B cell (primary cell): ENCODE measurements at regions of chr3 and their contacts with region 1.

Region 1: DNA sequence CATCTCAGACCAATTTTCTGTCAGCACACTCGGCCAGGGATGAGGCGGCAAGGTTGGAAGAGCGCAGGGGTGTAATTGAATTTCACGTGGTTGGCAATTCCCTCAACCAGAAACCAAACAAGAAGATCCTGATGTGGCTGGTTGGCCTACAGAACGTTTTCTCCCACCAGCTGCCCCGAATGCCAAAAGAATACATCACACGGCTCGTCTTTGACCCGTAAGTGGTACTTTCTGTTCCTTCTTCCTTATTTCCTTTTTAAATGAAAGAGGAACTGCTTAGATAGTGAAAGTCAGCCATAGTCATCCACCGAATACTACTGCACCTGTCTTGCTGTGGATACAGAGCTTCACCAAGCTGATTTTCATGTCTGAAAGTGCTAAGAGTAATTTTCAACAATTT is 60.1 kb downstream of the SGO1 start:
- DNase-seq: peak; percentile 91
- ATAC-seq: peak; percentile 97
- H3K4me3 ChIP-seq: peak overlapping the region; percentile 2 to 51 (median 11)
- H3K4me3 Mint-ChIP-seq: peak overlapping the region; percentile 78
- H3K27ac ChIP-seq: peak overlapping the region; percentile 93 to 94
- H3K27ac Mint-ChIP-seq: peak overlapping the region; percentile 95
- H3K4me1 ChIP-seq: peaks cover 28 to 36% of the 10 kb centered on the region in 2 donors
- H3K4me1 Mint-ChIP-seq: peaks cover 36% of the 10 kb centered on the region
- H3K27me3 ChIP-seq: no peaks in the 10 kb centered on the region
- H3K27me3 Mint-ChIP-seq: no peaks in the 10 kb centered on the region
- CTCF ChIP-seq: no peak

Region 2: GRCh38 chr3:19146685-19147650 is 978.9 kb before region 1 on chr3:
- CTCF ChIA-PET with region 1: no interaction called
- POLR2A ChIA-PET with region 1: no interaction called
- intact Hi-C with region 1: loop called (anchors 5 kb)
- DNase-seq: peak; percentile 89
- ATAC-seq: peak; percentile 63
- H3K4me3 ChIP-seq: peak overlapping the region; percentile 49 to 84 (median 68)
- H3K4me3 Mint-ChIP-seq: peak overlapping the region; percentile 95
- H3K27ac ChIP-seq: peak overlapping the region; percentile 50 to 80
- H3K27ac Mint-ChIP-seq: peak overlapping the region; percentile 91
- H3K4me1 ChIP-seq: peaks cover 18 to 22% of the 10 kb centered on the region in 2 donors
- H3K4me1 Mint-ChIP-seq: peaks cover 24% of the 10 kb centered on the region
- H3K27me3 ChIP-seq: peaks cover 0 to 5% (median 2%) of the 10 kb centered on the region in 4 experiments
- H3K27me3 Mint-ChIP-seq: peaks cover 13% of the 10 kb centered on the region
- CTCF ChIP-seq: peak; percentile 72

Region 3: DNA sequence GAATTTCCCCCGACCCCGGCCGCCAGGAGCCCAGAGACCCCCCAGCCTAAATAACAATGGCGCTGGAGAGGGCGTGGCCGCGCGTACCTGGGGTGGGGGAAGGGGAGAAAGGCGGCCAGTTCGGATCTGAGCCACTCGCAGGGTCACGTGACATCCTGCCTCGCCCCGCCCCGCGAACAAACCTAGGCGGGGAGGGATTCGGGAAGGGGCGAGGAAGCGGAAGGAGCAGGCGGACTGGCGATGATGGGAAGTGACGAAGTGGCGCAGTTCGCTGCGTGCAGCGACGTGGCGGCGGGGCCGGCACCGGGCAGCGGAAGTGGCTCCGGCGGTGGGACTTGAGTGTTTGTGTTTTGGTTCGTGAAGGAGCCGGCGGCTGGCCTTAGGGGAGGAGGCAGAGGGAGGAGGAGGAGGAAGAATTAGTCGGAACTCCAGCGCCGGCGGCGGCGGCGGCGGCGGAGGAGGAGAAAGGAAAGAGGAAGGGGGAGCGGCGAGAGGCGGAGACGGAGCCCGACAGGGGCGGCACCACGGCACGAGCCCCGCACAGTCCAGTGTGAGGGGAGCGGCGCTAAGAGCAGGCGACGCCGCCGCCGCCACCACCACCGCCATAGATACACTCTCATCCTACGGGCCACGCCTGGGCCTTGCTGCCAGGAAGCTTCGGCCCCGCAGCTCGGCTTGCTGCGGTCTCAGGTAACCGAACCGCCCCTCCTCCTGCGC is 178.9 kb before region 1 on chr3 and contains the start of gene RAB5A:
- CTCF ChIA-PET with region 1: no interaction called
- POLR2A ChIA-PET with region 1: no interaction called
- intact Hi-C with region 1: loop called (anchors 1 kb)
- DNase-seq: peak; percentile 99
- ATAC-seq: peak; percentile 85
- H3K4me3 ChIP-seq: peak within 1 kb of the TSS; percentile 71 to 95 (median 87)
- H3K4me3 Mint-ChIP-seq: peak within 1 kb of the TSS; percentile 93
- H3K27ac ChIP-seq: peak within 1 kb of the TSS; percentile 96 to 98
- H3K27ac Mint-ChIP-seq: peak within 1 kb of the TSS; percentile 97
- H3K4me1 ChIP-seq: peaks cover 18 to 22% of the 10 kb centered on the region in 2 donors
- H3K4me1 Mint-ChIP-seq: peaks cover 47% of the 10 kb centered on the region
- H3K27me3 ChIP-seq: no peaks in the 10 kb centered on the region
- H3K27me3 Mint-ChIP-seq: no peaks in the 10 kb centered on the region
- CTCF ChIP-seq: no peak
- total RNA-seq, gene RAB5A: 59.4 and 61.9 TPM in 2 replicates

Region 4: DNA sequence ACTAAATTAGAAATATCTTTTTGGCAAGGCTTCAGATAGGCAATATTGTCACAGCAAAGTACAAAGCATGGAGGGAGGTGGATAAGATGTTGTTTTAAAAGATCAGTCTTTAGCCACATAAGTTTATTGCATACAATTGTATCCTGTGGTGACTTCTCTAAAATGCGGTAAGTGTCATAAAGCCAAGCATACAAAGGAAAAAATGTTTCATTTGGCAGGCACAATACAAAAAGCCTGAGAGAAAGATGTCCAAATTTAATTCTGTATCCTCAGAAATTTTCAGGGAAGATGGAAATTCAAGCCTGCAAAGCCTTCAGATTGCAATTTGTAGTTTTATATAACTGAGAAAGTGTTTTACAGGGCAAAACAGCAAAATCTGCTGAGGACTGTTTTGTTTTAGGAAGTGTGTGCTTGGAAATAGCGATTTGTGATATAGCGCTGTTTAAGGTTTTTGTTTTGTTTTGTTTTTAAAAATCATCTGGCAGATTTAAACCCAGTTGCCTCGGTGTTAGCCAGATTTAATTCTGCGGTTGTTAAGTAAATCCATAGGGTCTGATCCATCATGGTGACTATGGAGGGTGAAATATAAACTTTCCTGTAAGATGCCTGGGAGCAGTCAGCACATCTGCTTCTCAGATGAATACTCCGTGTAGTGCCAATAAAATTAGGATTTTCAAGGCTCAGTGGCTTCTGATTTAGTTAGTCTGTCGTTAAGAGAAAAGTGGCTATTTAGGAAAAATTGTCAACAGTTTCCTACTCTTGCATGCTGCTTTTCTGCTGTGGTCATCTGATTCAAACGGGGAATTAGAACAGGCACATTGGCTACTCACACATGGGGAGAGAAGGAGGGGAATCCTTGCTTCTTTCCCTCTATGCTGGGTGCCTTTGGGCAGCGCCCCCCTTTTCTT is 77.7 kb before region 1 on chr3:
- CTCF ChIA-PET with region 1: interaction called, 4 read pairs
- POLR2A ChIA-PET with region 1: interaction called, 4 read pairs
- intact Hi-C with region 1: loop called (anchors 2 kb)
- DNase-seq: no peak
- ATAC-seq: no peak
- H3K4me3 ChIP-seq: peak overlapping the region in 4 of 5 experiments; percentile 1 to 62 (median 41)
- H3K4me3 Mint-ChIP-seq: peak overlapping the region; percentile 64
- H3K27ac ChIP-seq: peak overlapping the region; percentile 64 to 88
- H3K27ac Mint-ChIP-seq: peak overlapping the region; percentile 54
- H3K4me1 ChIP-seq: peaks cover 46 to 60% of the 10 kb centered on the region in 2 donors
- H3K4me1 Mint-ChIP-seq: peaks cover 74% of the 10 kb centered on the region
- H3K27me3 ChIP-seq: no peaks in the 10 kb centered on the region
- H3K27me3 Mint-ChIP-seq: no peaks in the 10 kb centered on the region
- CTCF ChIP-seq: no peak

Region 5: GRCh38 chr3:20160230-20160629 is 34.3 kb after region 1 on chr3:
- CTCF ChIA-PET with region 1: no interaction called
- POLR2A ChIA-PET with region 1: no interaction called
- intact Hi-C with region 1: loop called (anchors 5 kb)
- DNase-seq: peak; percentile 22
- ATAC-seq: peak; percentile 24
- H3K4me3 ChIP-seq: peak overlapping the region in 1 of 5 experiments; percentile 1
- H3K4me3 Mint-ChIP-seq: peak overlapping the region; percentile 20
- H3K27ac ChIP-seq: peak overlapping the region in 1 of 2 donors; percentile 76
- H3K27ac Mint-ChIP-seq: peak overlapping the region; percentile 2
- H3K4me1 ChIP-seq: peaks cover 19 to 33% of the 10 kb centered on the region in 2 donors
- H3K4me1 Mint-ChIP-seq: peaks cover 30% of the 10 kb centered on the region
- H3K27me3 ChIP-seq: no peaks in the 10 kb centered on the region
- H3K27me3 Mint-ChIP-seq: no peaks in the 10 kb centered on the region
- CTCF ChIP-seq: no peak

Region 6: DNA sequence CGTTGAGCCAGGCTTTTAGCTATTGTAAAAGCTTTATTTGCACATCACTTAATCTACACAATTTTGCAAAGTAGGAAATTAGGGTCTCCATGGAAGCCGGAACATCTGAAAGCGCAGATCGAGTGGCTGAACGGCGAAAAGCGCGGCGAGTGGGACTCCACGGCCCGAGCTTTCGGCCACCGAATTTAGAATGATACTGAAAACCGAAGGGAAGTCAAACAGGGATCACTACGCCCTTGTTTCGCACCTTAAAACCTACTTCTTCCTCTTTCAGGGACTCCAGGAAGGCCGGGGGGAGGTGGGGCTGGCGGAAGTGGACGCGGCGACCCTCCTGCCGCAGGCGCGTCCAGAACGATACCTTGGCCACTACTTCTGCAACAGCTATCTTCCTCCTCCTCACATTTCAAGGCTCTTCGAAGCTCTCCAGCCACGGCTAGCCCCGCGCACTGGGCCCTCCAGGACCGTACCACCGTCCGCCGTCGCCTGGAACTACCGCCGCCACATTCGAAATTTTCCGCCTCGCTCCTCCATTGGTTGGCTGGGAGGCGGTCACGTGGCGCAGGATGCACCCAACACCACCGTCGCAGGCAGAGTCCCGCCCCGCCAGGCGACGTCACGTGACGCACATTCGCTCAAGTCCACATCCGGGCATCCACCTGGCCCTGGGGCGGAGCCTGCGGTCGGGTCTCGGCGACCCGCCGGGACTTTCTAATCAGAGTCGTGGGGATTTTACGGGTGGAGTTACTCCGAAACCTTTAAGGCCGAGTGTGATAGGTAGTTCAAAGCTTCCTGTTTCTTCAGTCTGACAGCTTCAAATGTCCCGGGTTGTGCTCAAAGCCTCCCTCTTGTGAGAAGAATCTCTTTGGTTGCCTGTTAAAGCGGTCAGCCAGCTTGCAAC is 60.1 kb after region 1 on chr3 and contains the start of gene SGO1:
- CTCF ChIA-PET with region 1: interaction called, 5 read pairs
- POLR2A ChIA-PET with region 1: no interaction called
- intact Hi-C with region 1: loop called (anchors 1 kb)
- DNase-seq: peak; percentile 100
- ATAC-seq: peak; percentile 91
- H3K4me3 ChIP-seq: peak within 1 kb of the TSS; percentile 70 to 97 (median 85)
- H3K4me3 Mint-ChIP-seq: no peak within 1 kb of the TSS
- H3K27ac ChIP-seq: peak within 1 kb of the TSS; percentile 98
- H3K27ac Mint-ChIP-seq: no peak within 1 kb of the TSS
- H3K4me1 ChIP-seq: peaks cover 19 to 26% of the 10 kb centered on the region in 2 donors
- H3K4me1 Mint-ChIP-seq: peaks cover 4% of the 10 kb centered on the region
- H3K27me3 ChIP-seq: no peaks in the 10 kb centered on the region
- H3K27me3 Mint-ChIP-seq: no peaks in the 10 kb centered on the region
- CTCF ChIP-seq: no peak
- total RNA-seq, gene SGO1: 6.4 and 6.7 TPM in 2 replicates